ENCODE measurements at regions of chr5 and their contacts with region 1.

Region 1: GRCh38 chr5:140710899-140711552 is 10.8 kb downstream of the ZMAT2 start:
- DNase-seq: peak; percentile 93
- ATAC-seq: peak; percentile 95
- H3K4me3 Mint-ChIP-seq: peak overlapping the region; percentile 86
- H3K27ac Mint-ChIP-seq: peak overlapping the region; percentile 97
- H3K4me1 Mint-ChIP-seq: peaks cover 18% of the 10 kb centered on the region
- H3K27me3 Mint-ChIP-seq: no peaks in the 10 kb centered on the region

Region 2: DNA sequence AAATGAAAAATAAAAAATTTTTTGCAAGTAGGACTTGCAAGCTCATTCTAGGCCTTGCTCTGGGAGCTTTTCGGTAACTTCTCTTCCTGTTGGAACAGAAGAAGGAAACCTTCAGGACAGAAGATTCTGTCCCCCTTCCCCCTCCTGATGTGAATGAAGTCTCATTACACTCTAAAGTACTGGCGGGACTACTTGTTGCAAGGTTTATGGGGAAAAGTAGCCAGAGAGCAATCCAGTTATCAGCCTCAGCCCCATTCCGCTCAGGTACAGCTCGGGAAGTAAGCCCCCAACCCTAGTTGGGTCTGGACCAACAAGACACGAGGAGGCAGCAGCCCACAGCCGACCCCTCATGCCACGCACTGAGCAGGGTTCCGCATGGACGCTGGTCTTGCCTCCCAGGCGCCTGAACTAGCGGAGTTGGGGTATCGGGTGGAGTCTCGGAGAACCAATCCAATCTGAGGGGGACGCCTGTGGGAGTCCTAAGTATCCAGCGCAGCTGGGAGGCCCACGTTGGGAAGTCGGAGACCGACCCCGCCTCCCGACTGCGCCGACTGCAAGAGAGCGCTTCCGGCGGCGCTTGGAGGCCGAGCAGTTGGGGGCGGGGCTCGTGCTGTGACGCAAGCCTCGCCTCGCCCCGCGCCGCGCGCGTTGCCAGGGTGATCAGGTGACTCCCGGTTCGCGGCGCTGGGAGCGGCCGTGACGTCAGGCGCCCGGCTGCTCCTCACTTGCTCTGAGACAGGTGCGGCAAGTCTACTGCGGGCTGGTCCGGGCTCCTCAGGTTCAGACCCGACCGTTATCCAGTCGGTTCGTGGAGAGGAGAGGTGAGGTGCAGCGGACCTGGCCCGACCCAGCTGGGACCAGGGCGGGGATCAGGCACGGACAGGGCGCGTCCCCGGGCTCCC is 536.3 kb before region 1 on chr5 and contains the start of gene CYSTM1:
- CTCF ChIA-PET with region 1: no interaction called
- POLR2A ChIA-PET with region 1: no interaction called
- intact Hi-C with region 1: loop called in 1 of 2 experiments (anchors 10 kb)
- DNase-seq: peak; percentile 98
- ATAC-seq: peak; percentile 93
- H3K4me3 Mint-ChIP-seq: peak within 1 kb of the TSS; percentile 91
- H3K27ac Mint-ChIP-seq: peak within 1 kb of the TSS; percentile 82
- H3K4me1 Mint-ChIP-seq: peaks cover 15% of the 10 kb centered on the region
- H3K27me3 Mint-ChIP-seq: no peaks in the 10 kb centered on the region
- total RNA-seq, gene CYSTM1: 15.2 to 18.7 TPM

Region 3: DNA sequence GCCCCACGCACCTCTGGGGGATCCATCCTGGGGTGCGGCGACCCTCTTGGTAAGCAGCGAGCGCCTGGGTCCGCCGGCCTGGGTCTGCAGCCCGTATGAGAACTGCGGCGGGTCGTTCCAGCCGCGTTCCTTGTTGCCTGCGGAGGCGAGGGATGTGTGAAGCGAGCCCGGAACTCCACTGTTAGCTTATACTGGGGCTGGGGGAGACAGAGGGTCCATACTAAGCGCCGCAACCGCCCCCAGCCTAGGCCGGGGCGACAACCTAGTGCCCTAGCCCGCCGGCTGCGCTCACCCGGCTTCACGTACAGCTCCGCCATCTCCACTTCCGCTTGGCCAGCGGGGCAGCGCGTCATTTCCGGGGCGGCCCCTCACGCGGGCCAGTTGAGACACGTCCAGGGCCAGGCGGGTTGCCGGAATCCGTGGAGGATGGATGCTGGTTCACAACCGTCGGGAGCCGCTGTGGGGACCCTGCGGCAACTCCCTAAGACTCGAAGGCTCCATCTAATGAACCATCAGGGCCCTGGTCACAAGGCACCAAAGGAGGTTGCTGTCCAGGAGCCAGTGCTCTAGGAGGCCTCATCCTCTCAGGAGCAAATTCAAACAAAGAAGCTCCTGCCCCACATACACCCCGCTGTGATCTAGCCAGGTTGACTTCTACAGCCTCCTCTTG is 153.8 kb before region 1 on chr5 and contains the start of gene SRA1:
- CTCF ChIA-PET with region 1: no interaction called
- POLR2A ChIA-PET with region 1: no interaction called
- intact Hi-C with region 1: loop called (anchors 2 to 5 kb)
- DNase-seq: peak; percentile 92
- ATAC-seq: peak; percentile 83
- H3K4me3 Mint-ChIP-seq: peak within 1 kb of the TSS; percentile 89
- H3K27ac Mint-ChIP-seq: peak within 1 kb of the TSS; percentile 93
- H3K4me1 Mint-ChIP-seq: peaks cover 45% of the 10 kb centered on the region
- H3K27me3 Mint-ChIP-seq: no peaks in the 10 kb centered on the region
- total RNA-seq, gene SRA1: 33.2 to 47.3 TPM

Region 4: GRCh38 chr5:140639148-140639979 is 71.7 kb before region 1 on chr5 and contains the start of gene TMCO6:
- CTCF ChIA-PET with region 1: no interaction called
- POLR2A ChIA-PET with region 1: no interaction called
- intact Hi-C with region 1: loop called in 1 of 2 experiments (anchors 2 kb)
- DNase-seq: peak; percentile 99
- ATAC-seq: peak; percentile 94
- H3K4me3 Mint-ChIP-seq: peak within 1 kb of the TSS; percentile 93
- H3K27ac Mint-ChIP-seq: peak within 1 kb of the TSS; percentile 95
- H3K4me1 Mint-ChIP-seq: peaks cover 39% of the 10 kb centered on the region
- H3K27me3 Mint-ChIP-seq: no peaks in the 10 kb centered on the region
- total RNA-seq, gene TMCO6: 36.5 to 36.6 TPM

Region 5: GRCh38 chr5:140664359-140665119 is 46.5 kb before region 1 on chr5 and contains the start of gene WDR55:
- CTCF ChIA-PET with region 1: interaction called, 3 read pairs
- POLR2A ChIA-PET with region 1: no interaction called
- intact Hi-C with region 1: loop called in 1 of 2 experiments (anchors 1 kb)
- DNase-seq: peak; percentile 97
- ATAC-seq: peak; percentile 96
- H3K4me3 Mint-ChIP-seq: peak within 1 kb of the TSS; percentile 98
- H3K27ac Mint-ChIP-seq: peak within 1 kb of the TSS; percentile 96
- H3K4me1 Mint-ChIP-seq: peaks cover 28% of the 10 kb centered on the region
- H3K27me3 Mint-ChIP-seq: no peaks in the 10 kb centered on the region
- total RNA-seq, gene WDR55: 25.9 to 31.7 TPM

Region 6: GRCh38 chr5:140700177-140701144 is 10.6 kb before region 1 on chr5 and contains the start of gene ZMAT2:
- CTCF ChIA-PET with region 1: interaction called, 9 read pairs
- POLR2A ChIA-PET with region 1: interaction called, 11 read pairs
- intact Hi-C with region 1: loop called in 1 of 2 experiments (anchors 1 kb)
- DNase-seq: peak; percentile 96
- ATAC-seq: peak; percentile 100
- H3K4me3 Mint-ChIP-seq: peak within 1 kb of the TSS; percentile 94
- H3K27ac Mint-ChIP-seq: peak within 1 kb of the TSS; percentile 94
- H3K4me1 Mint-ChIP-seq: peaks cover 24% of the 10 kb centered on the region
- H3K27me3 Mint-ChIP-seq: no peaks in the 10 kb centered on the region
- total RNA-seq, gene ZMAT2: 49.9 to 55.3 TPM

Region 7: DNA sequence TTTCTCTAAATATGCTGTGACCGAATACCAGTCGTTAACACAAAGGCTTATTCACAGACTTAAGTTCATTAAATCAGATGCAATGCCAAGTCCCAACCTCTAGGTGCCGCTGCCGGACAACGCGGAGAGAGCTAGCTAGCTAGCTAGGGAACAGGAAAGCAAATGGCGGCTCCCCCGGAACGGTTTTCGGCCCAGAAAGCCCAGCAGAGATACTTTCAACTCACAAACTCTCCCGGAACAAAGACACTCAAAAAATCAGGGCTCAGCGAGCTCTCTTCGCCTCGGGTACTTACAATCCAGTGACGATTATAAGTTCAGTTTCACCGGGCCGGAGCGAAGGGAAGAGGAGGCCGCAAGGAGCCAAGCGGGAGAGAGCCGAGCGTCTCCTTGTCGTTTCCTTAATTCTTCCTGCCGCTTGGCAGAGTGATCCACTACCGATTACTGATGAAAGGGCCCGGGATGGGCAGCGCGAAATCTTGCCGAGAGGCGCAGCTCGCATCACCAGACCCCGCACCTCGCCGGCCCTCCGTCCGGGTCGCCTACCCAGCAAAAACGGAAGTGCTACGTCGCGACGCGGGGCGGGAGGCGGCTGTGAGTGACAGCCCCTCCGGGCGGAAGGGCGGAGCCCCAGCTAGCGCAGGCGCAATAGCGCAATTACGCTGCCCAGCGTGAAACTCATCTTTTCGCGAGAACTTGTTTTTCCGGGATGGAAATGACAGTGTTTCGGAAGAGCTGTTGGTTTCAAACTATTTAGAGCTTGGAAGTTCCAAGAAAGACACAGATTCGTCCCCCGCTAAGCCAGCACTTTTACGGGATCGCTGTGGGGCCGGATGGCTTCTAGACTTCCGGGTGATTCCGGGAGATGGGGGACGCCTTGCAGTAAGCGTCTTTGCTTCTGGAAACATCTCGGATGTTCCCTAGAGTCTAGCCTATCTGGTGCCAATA is 609.5 kb after region 1 on chr5 and contains the start of gene TAF7:
- CTCF ChIA-PET with region 1: no interaction called
- POLR2A ChIA-PET with region 1: no interaction called
- intact Hi-C with region 1: loop called in 1 of 2 experiments (anchors 1 kb)
- DNase-seq: peak; percentile 96
- ATAC-seq: peak; percentile 96
- H3K4me3 Mint-ChIP-seq: peak within 1 kb of the TSS; percentile 91
- H3K27ac Mint-ChIP-seq: peak within 1 kb of the TSS; percentile 100
- H3K4me1 Mint-ChIP-seq: peaks cover 23% of the 10 kb centered on the region
- H3K27me3 Mint-ChIP-seq: peaks cover 2% of the 10 kb centered on the region
- total RNA-seq, gene TAF7: 45.2 to 54.4 TPM

Measured in activated CD4-positive, alpha-beta T cell treated with anti-CD3 and anti-CD28 coated beads for 36 hours (primary cell).